WTC11 (cell line): ENCODE measurements at regions of chr17 and their contacts with region 1.

Region 1: DNA sequence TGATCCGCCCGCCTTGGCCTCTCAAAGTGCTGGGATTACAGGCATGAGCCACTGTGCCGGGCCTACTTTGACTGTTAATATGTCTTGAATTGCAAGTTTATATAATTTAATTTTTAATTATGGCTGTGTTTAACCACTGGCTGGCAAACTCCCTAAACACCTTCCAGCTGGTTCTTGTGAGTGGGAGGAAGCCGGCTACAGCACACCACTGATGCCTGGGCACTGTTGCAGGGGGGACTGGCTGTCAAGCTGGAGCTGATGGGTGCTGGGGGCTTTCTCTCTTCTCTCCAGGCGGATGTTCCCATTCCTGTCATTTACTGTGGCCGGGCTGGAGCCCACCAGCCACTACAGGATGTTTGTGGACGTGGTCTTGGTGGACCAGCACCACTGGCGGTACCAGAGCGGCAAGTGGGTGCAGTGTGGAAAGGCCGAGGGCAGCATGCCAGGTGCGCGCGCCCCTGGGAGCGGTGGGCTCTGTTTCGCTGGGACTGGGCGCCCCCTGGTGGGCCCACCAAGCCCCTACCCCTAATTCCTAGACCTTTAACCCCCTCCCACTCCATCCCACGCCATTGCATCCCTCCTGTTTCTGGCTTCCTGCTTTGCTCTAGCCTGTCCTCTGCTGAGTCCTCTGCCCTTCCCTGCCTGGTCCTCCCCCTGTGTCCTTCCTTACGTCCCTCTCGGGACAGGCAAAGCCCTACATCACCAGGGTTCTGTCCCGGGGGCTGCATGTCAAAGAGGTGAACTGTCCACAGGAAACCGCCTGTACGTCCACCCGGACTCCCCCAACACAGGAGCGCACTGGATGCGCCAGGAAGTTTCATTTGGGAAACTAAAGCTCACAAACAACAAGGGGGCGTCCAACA is 9.5 kb downstream of the TBX21 start:
- DNase-seq: peak; percentile 76
- ATAC-seq: peak; percentile 91
- H3K4me3 Mint-ChIP-seq: no peak overlapping the region
- H3K27ac Mint-ChIP-seq: no peak overlapping the region
- H3K4me1 Mint-ChIP-seq: no peaks in the 10 kb centered on the region
- H3K27me3 Mint-ChIP-seq: peaks cover 13% of the 10 kb centered on the region
- CTCF ChIP-seq: peak; percentile 86

Region 2: GRCh38 chr17:47687748-47688147 is 54.8 kb before region 1 on chr17:
- CTCF ChIA-PET with region 1: interaction called, 11 read pairs
- POLR2A ChIA-PET with region 1: no interaction called
- DNase-seq: peak; percentile 42
- ATAC-seq: peak; percentile 71
- H3K4me3 Mint-ChIP-seq: no peak overlapping the region
- H3K27ac Mint-ChIP-seq: peak overlapping the region; percentile 82
- H3K4me1 Mint-ChIP-seq: peaks cover 46% of the 10 kb centered on the region
- H3K27me3 Mint-ChIP-seq: no peaks in the 10 kb centered on the region
- CTCF ChIP-seq: no peak

Region 3: GRCh38 chr17:47708863-47709541 is 33.5 kb before region 1 on chr17:
- CTCF ChIA-PET with region 1: interaction called, 10 read pairs
- POLR2A ChIA-PET with region 1: no interaction called
- DNase-seq: peak; percentile 49
- ATAC-seq: peak; percentile 81
- H3K4me3 Mint-ChIP-seq: peak overlapping the region; percentile 43
- H3K27ac Mint-ChIP-seq: no peak overlapping the region
- H3K4me1 Mint-ChIP-seq: peaks cover 9% of the 10 kb centered on the region
- H3K27me3 Mint-ChIP-seq: peaks cover 34% of the 10 kb centered on the region
- CTCF ChIP-seq: no peak

Region 4: DNA sequence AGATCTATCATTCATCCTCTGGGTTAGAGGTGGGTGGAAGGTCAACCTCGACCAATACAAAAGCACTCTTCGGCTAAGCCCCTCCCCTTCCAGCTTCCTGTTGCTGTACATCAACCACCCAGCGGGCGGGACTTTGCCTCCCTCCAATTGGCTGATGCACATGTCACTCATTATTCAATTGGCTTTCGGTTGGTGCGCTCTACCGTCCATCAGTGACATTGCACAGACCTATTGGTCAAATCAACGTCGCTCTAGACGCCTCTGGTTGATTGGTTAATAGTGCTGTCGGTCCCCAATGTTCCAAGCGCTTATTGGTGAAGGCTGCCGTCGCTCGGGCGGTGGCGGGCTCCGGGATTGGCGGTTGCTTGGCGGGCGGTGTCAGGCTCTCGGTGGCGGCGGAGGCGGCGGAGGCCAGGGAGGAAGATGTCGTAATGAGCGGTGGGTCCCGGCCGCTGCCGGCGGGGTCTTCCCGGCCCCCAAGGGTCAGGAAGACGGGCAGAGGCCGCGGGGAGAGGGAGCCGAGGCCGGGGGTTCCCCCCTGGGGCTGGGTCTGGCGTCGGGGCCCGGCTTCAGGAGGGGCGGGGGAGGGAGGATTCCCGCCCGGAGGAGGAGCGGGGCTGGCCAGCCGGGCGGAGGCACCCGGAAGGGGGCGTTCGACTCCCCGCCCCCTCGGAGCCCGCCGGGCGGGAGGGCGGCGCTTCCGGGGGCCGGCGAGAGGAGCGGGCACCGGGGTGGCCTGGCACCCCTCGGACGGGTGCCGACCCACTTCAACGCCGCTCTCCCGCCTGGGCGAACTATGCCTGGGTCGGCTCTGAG is 153.5 kb after region 1 on chr17 and contains the start of gene SP2:
- CTCF ChIA-PET with region 1: no interaction called
- POLR2A ChIA-PET with region 1: no interaction called
- DNase-seq: peak; percentile 99
- ATAC-seq: peak; percentile 95
- H3K4me3 Mint-ChIP-seq: peak within 1 kb of the TSS; percentile 97
- H3K27ac Mint-ChIP-seq: peak within 1 kb of the TSS; percentile 96
- H3K4me1 Mint-ChIP-seq: peaks cover 37% of the 10 kb centered on the region
- H3K27me3 Mint-ChIP-seq: no peaks in the 10 kb centered on the region
- CTCF ChIP-seq: no peak
- total RNA-seq, gene SP2: 9.9 to 11.5 TPM (median 10.7 TPM) in 3 replicates